CD4-positive, alpha-beta T cell (primary cell): ENCODE measurements at regions of chr7 and their contacts with region 1.

Region 1: GRCh38 chr7:74051629-74052410 is 23.8 kb downstream of the ELN start:
- DNase-seq: peak in 1 of 14 experiments; percentile 11
- ATAC-seq: no peak
- H3K4me3 ChIP-seq: no peak overlapping the region
- H3K4me3 Mint-ChIP-seq: no peak overlapping the region
- H3K27ac ChIP-seq: no peak overlapping the region
- H3K27ac Mint-ChIP-seq: no peak overlapping the region
- H3K4me1 ChIP-seq: no peaks in the 10 kb centered on the region
- H3K4me1 Mint-ChIP-seq: no peaks in the 10 kb centered on the region
- H3K27me3 ChIP-seq: peaks cover 0 to 3% of the 10 kb centered on the region in 2 experiments
- H3K27me3 Mint-ChIP-seq: no peaks in the 10 kb centered on the region
- CTCF ChIP-seq: no peak

Region 2: DNA sequence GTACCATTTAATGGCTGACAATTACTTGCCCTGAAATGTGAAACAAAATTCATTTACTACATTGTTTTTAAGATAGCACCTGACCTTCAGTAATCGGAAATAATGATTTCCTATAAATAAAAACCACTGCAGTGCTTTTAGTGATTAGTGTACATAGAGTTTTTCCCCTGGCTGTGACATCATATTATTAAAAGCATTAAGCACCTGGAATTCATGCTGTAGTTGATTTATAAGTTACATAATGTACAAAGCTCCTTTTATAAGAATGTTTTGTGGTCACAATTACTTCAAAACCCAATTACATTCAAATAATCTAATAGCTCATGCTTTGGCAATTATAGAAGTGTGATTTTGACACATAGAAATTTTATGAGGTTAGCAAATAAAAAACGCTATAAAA is 78.1 kb after region 1 on chr7:
- CTCF ChIA-PET with region 1: no interaction called
- POLR2A ChIA-PET with region 1: no interaction called
- intact Hi-C with region 1: loop called in 1 of 2 experiments (anchors 5 kb)
- DNase-seq: no peak
- ATAC-seq: no peak
- H3K4me3 ChIP-seq: no peak overlapping the region
- H3K4me3 Mint-ChIP-seq: no peak overlapping the region
- H3K27ac ChIP-seq: no peak overlapping the region
- H3K27ac Mint-ChIP-seq: no peak overlapping the region
- H3K4me1 ChIP-seq: no peaks in the 10 kb centered on the region
- H3K4me1 Mint-ChIP-seq: no peaks in the 10 kb centered on the region
- H3K27me3 ChIP-seq: no peaks in the 10 kb centered on the region
- H3K27me3 Mint-ChIP-seq: no peaks in the 10 kb centered on the region
- CTCF ChIP-seq: no peak

Region 3: GRCh38 chr7:74306004-74306729 is 254.3 kb after region 1 on chr7:
- CTCF ChIA-PET with region 1: no interaction called
- POLR2A ChIA-PET with region 1: no interaction called
- intact Hi-C with region 1: no loop called
- DNase-seq: no peak
- ATAC-seq: no peak
- H3K4me3 ChIP-seq: no peak overlapping the region
- H3K4me3 Mint-ChIP-seq: peak overlapping the region; percentile 20
- H3K27ac ChIP-seq: no peak overlapping the region
- H3K27ac Mint-ChIP-seq: no peak overlapping the region
- H3K4me1 ChIP-seq: peaks cover 14% of the 10 kb centered on the region
- H3K4me1 Mint-ChIP-seq: peaks cover 7% of the 10 kb centered on the region
- H3K27me3 ChIP-seq: peaks cover 7 to 13% of the 10 kb centered on the region in 2 experiments
- H3K27me3 Mint-ChIP-seq: peaks cover 16% of the 10 kb centered on the region
- CTCF ChIP-seq: no peak